Naive thymus-derived CD4-positive, alpha-beta T cell (primary cell): ENCODE measurements at regions of chr17 and their contacts with region 1.

Region 1: GRCh38 chr17:75405365-75406221 is at the start of gene GRB2:
- DNase-seq: peak; percentile 98 to 100 (median 100)
- ATAC-seq: peak; percentile 93
- H3K4me3 ChIP-seq: peak within 1 kb of the TSS; percentile 83
- H3K4me3 Mint-ChIP-seq: peak within 1 kb of the TSS; percentile 91 to 100 (median 96)
- H3K27ac ChIP-seq: peak within 1 kb of the TSS; percentile 91
- H3K27ac Mint-ChIP-seq: peak within 1 kb of the TSS; percentile 84 to 98 (median 95)
- H3K4me1 ChIP-seq: peaks cover 31 to 33% of the 10 kb centered on the region in 2 donors
- H3K4me1 Mint-ChIP-seq: peaks cover 26 to 51% (median 47%) of the 10 kb centered on the region in 7 donors
- H3K27me3 ChIP-seq: no peaks in the 10 kb centered on the region
- H3K27me3 Mint-ChIP-seq: no peaks in the 10 kb centered on the region
- total RNA-seq, gene GRB2: 112 to 167 (median 139) TPM

Region 2: GRCh38 chr17:75034236-75034908 is 371.2 kb before region 1 on chr17:
- CTCF ChIA-PET with region 1: no interaction called
- POLR2A ChIA-PET with region 1: no interaction called
- intact Hi-C with region 1: loop called (anchors 10 kb)
- DNase-seq: peak; percentile 63 to 95 (median 77)
- ATAC-seq: peak; percentile 37
- H3K4me3 ChIP-seq: peak overlapping the region; percentile 72
- H3K4me3 Mint-ChIP-seq: peak overlapping the region; percentile 85 to 97 (median 94)
- H3K27ac ChIP-seq: peak overlapping the region; percentile 77
- H3K27ac Mint-ChIP-seq: peak overlapping the region; percentile 95 to 100 (median 99)
- H3K4me1 ChIP-seq: peaks cover 36 to 40% of the 10 kb centered on the region in 2 donors
- H3K4me1 Mint-ChIP-seq: peaks cover 26 to 73% (median 58%) of the 10 kb centered on the region in 7 donors
- H3K27me3 ChIP-seq: no peaks in the 10 kb centered on the region
- H3K27me3 Mint-ChIP-seq: peaks cover 0 to 10% (median 0%) of the 10 kb centered on the region in 5 donors

Region 3: GRCh38 chr17:75261336-75262111 is 144.1 kb before region 1 on chr17 and contains the starts of genes GGA3 and MRPS7:
- CTCF ChIA-PET with region 1: interaction called, 5 read pairs
- POLR2A ChIA-PET with region 1: interaction called, 14 read pairs
- intact Hi-C with region 1: loop called (anchors 1 kb)
- DNase-seq: peak; percentile 94 to 98 (median 96)
- ATAC-seq: peak; percentile 97
- H3K4me3 ChIP-seq: peak within 1 kb of the TSS; percentile 98
- H3K4me3 Mint-ChIP-seq: peak within 1 kb of the TSS; percentile 94 to 100 (median 97)
- H3K27ac ChIP-seq: peak within 1 kb of the TSS; percentile 99
- H3K27ac Mint-ChIP-seq: peak within 1 kb of the TSS; percentile 100
- H3K4me1 ChIP-seq: peaks cover 23% of the 10 kb centered on the region in 2 donors
- H3K4me1 Mint-ChIP-seq: peaks cover 40 to 65% (median 62%) of the 10 kb centered on the region in 7 donors
- H3K27me3 ChIP-seq: no peaks in the 10 kb centered on the region
- H3K27me3 Mint-ChIP-seq: no peaks in the 10 kb centered on the region
- total RNA-seq, gene GGA3: 79.6 to 128 (median 87.4) TPM
- total RNA-seq, gene MRPS7: 29.2 to 70.1 (median 34.4) TPM

Region 4: DNA sequence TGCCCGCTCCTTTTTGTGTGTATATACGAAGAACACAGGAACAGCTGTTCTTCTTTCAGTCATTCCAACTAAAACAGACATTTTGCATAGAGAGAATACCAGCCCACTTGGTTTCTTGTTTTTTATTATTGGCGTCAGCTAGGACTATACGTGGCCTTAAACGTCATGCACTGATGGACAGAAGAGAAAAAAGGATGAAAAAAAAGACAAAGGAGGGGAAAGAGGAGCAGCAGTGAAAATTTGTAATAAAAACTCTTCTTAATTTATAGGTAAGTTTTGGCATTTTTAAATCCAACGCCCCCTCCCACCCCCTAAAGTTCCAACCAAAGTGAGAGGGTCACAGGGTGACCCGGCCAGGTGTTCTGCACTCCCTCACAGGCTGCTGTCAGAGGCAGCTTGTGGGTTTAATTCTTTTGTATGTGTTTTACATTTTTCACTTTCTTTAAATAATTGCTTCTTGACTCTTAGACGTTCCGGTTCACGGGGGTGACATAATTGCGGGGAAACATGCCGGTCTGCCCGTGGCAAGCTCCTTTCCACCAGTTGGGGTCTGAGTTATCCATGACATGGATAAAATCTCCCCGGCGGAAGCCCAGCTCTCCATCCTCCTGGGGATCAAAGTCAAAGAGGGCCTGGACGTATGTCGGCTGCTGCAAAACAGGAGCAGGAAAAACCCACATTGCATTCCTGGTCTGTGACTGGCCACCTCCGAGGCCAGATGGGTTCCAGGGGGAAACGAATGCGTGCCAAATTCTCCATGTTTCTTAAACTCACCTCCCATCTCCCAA is 85.5 kb before region 1 on chr17:
- CTCF ChIA-PET with region 1: interaction called, 14 read pairs
- POLR2A ChIA-PET with region 1: interaction called, 18 read pairs
- intact Hi-C with region 1: loop called (anchors 1 kb)
- DNase-seq: no peak
- ATAC-seq: no peak
- H3K4me3 ChIP-seq: no peak overlapping the region
- H3K4me3 Mint-ChIP-seq: no peak overlapping the region
- H3K27ac ChIP-seq: no peak overlapping the region
- H3K27ac Mint-ChIP-seq: peak overlapping the region in 3 of 9 donors; percentile 13 to 51 (median 48)
- H3K4me1 ChIP-seq: peaks cover 4% of the 10 kb centered on the region in 2 donors
- H3K4me1 Mint-ChIP-seq: peaks cover 0 to 20% (median 9%) of the 10 kb centered on the region in 7 donors
- H3K27me3 ChIP-seq: no peaks in the 10 kb centered on the region
- H3K27me3 Mint-ChIP-seq: no peaks in the 10 kb centered on the region

Region 5: GRCh38 chr17:75380315-75380714 is 25.3 kb before region 1 on chr17:
- CTCF ChIA-PET with region 1: no interaction called
- POLR2A ChIA-PET with region 1: no interaction called
- intact Hi-C with region 1: loop called in 1 of 2 experiments (anchors 2 kb)
- DNase-seq: no peak
- ATAC-seq: no peak
- H3K4me3 ChIP-seq: no peak overlapping the region
- H3K4me3 Mint-ChIP-seq: peak overlapping the region in 1 of 10 donors; percentile 18
- H3K27ac ChIP-seq: no peak overlapping the region
- H3K27ac Mint-ChIP-seq: peak overlapping the region in 2 of 9 donors; percentile 56 to 64
- H3K4me1 ChIP-seq: peaks cover 0 to 8% of the 10 kb centered on the region in 2 donors
- H3K4me1 Mint-ChIP-seq: peaks cover 13 to 76% (median 56%) of the 10 kb centered on the region in 7 donors
- H3K27me3 ChIP-seq: no peaks in the 10 kb centered on the region
- H3K27me3 Mint-ChIP-seq: no peaks in the 10 kb centered on the region

Region 6: GRCh38 chr17:75440738-75441448 is 35.3 kb after region 1 on chr17:
- CTCF ChIA-PET with region 1: no interaction called
- POLR2A ChIA-PET with region 1: no interaction called
- intact Hi-C with region 1: no loop called
- DNase-seq: no peak
- ATAC-seq: no peak
- H3K4me3 ChIP-seq: no peak overlapping the region
- H3K4me3 Mint-ChIP-seq: no peak overlapping the region
- H3K27ac ChIP-seq: no peak overlapping the region
- H3K27ac Mint-ChIP-seq: no peak overlapping the region
- H3K4me1 ChIP-seq: peaks cover 0 to 4% of the 10 kb centered on the region in 2 donors
- H3K4me1 Mint-ChIP-seq: peaks cover 0 to 5% (median 4%) of the 10 kb centered on the region in 7 donors
- H3K27me3 ChIP-seq: no peaks in the 10 kb centered on the region
- H3K27me3 Mint-ChIP-seq: peaks cover 0 to 5% (median 0%) of the 10 kb centered on the region in 5 donors

Region 7: GRCh38 chr17:75515496-75516254 is 110.1 kb after region 1 on chr17 and contains the start of gene CASKIN2:
- CTCF ChIA-PET with region 1: no interaction called
- POLR2A ChIA-PET with region 1: interaction called, 7 read pairs
- intact Hi-C with region 1: loop called (anchors 1 kb)
- DNase-seq: peak; percentile 57 to 88 (median 70)
- ATAC-seq: peak; percentile 80
- H3K4me3 ChIP-seq: peak within 1 kb of the TSS; percentile 97
- H3K4me3 Mint-ChIP-seq: peak within 1 kb of the TSS; percentile 69 to 85 (median 78)
- H3K27ac ChIP-seq: no peak within 1 kb of the TSS
- H3K27ac Mint-ChIP-seq: peak within 1 kb of the TSS in 4 of 9 donors; percentile 36 to 63 (median 47)
- H3K4me1 ChIP-seq: peaks cover 23 to 25% of the 10 kb centered on the region in 2 donors
- H3K4me1 Mint-ChIP-seq: peaks cover 18 to 28% (median 22%) of the 10 kb centered on the region in 7 donors
- H3K27me3 ChIP-seq: no peaks in the 10 kb centered on the region
- H3K27me3 Mint-ChIP-seq: peaks cover 0 to 14% (median 0%) of the 10 kb centered on the region in 5 donors
- total RNA-seq, gene CASKIN2: 0.22 to 1.2 (median 0.92) TPM

Region 8: GRCh38 chr17:75933808-75934207 is 528.2 kb after region 1 on chr17:
- CTCF ChIA-PET with region 1: no interaction called
- POLR2A ChIA-PET with region 1: no interaction called
- intact Hi-C with region 1: no loop called
- DNase-seq: no peak
- ATAC-seq: no peak
- H3K4me3 ChIP-seq: no peak overlapping the region
- H3K4me3 Mint-ChIP-seq: no peak overlapping the region
- H3K27ac ChIP-seq: no peak overlapping the region
- H3K27ac Mint-ChIP-seq: no peak overlapping the region
- H3K4me1 ChIP-seq: no peaks in the 10 kb centered on the region
- H3K4me1 Mint-ChIP-seq: no peaks in the 10 kb centered on the region
- H3K27me3 ChIP-seq: no peaks in the 10 kb centered on the region
- H3K27me3 Mint-ChIP-seq: no peaks in the 10 kb centered on the region